MCF 10A (cell line): ENCODE measurements at regions of chr3 and their contacts with region 1.

Region 1: GRCh38 chr3:156674046-156674910 is at the start of gene TIPARP:
- DNase-seq: peak; percentile 97
- H3K4me3 Mint-ChIP-seq: peak within 1 kb of the TSS; percentile 79
- H3K27ac Mint-ChIP-seq: peak within 1 kb of the TSS; percentile 89
- H3K4me1 Mint-ChIP-seq: peaks cover 20% of the 10 kb centered on the region
- H3K27me3 Mint-ChIP-seq: no peaks in the 10 kb centered on the region
- CTCF ChIP-seq: peak; percentile 40
- total RNA-seq, gene TIPARP: 41.6 and 50.0 TPM in 2 replicates

Region 2: DNA sequence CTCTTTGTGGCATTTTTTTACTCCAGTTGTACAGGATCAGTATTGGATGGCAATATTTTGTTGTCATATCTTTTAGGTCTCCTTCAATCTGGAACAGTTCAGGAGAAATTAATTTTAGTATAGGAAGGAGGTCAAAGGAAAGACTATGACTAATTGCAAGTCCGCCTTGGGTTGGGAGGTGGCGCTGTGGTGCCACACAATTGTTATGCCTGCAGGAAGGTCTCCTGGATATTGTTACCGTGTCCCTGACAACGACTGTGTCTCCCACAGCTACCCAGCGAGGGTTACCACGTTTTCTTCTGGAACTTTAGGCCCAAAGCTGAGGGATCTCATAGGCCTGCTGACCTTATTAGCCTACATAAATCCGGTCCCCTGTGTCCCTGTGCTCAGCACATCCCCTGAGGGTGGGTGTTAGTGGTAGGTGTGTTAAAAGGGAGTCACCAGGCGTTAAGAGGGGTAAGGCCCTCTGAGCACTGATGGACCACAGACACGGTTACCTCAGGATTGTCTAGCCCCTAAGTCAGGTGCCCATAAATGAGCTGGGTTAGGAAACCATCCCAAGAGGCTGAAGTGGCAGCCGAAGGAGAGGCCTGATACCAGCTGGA is 522.4 kb before region 1 on chr3:
- CTCF ChIA-PET with region 1: interaction called, 13 read pairs
- POLR2A ChIA-PET with region 1: no interaction called
- intact Hi-C with region 1: loop called (anchors 2 kb)
- DNase-seq: peak; percentile 69
- H3K4me3 Mint-ChIP-seq: no peak overlapping the region
- H3K27ac Mint-ChIP-seq: no peak overlapping the region
- H3K4me1 Mint-ChIP-seq: no peaks in the 10 kb centered on the region
- H3K27me3 Mint-ChIP-seq: no peaks in the 10 kb centered on the region
- CTCF ChIP-seq: peak; percentile 74

Region 3: DNA sequence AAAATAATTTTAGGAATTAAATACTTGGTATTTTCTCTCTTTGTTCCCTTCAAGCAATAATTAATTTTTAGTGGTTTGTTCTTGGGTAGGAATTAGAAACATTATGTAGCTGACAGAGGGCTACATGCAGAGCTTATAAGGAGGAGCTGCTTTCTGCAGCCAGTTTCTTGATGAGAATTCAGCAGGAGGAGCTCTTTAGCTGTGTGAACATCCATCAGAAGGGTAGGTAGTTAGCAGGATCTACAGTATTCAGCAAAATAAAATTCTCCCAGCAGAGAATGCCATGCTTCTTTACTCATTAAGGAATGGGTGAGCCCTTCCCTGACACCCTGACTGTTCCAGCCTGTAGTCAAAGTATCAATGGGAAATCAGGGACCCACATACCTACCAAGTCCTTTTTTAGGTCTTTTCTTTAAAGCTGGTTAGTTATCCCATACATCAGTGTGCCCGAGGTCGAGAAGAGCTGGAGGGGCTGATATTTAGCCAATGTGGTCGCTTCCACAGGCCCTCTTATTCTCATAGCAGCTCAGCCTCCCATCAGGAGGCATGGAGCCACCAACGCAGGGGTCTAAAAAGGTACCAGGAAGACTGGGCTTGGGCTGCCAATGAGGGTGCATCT is 499.9 kb before region 1 on chr3:
- CTCF ChIA-PET with region 1: no interaction called
- POLR2A ChIA-PET with region 1: no interaction called
- intact Hi-C with region 1: no loop called
- DNase-seq: peak; percentile 51
- H3K4me3 Mint-ChIP-seq: no peak overlapping the region
- H3K27ac Mint-ChIP-seq: no peak overlapping the region
- H3K4me1 Mint-ChIP-seq: no peaks in the 10 kb centered on the region
- H3K27me3 Mint-ChIP-seq: no peaks in the 10 kb centered on the region
- CTCF ChIP-seq: peak; percentile 25

Region 4: GRCh38 chr3:156664011-156664830 is 10.1 kb before region 1 on chr3:
- CTCF ChIA-PET with region 1: interaction called, 11 read pairs
- POLR2A ChIA-PET with region 1: interaction called, 6 read pairs
- intact Hi-C with region 1: no loop called
- DNase-seq: no peak
- H3K4me3 Mint-ChIP-seq: no peak overlapping the region
- H3K27ac Mint-ChIP-seq: no peak overlapping the region
- H3K4me1 Mint-ChIP-seq: peaks cover 5% of the 10 kb centered on the region
- H3K27me3 Mint-ChIP-seq: no peaks in the 10 kb centered on the region
- CTCF ChIP-seq: no peak

Region 5: DNA sequence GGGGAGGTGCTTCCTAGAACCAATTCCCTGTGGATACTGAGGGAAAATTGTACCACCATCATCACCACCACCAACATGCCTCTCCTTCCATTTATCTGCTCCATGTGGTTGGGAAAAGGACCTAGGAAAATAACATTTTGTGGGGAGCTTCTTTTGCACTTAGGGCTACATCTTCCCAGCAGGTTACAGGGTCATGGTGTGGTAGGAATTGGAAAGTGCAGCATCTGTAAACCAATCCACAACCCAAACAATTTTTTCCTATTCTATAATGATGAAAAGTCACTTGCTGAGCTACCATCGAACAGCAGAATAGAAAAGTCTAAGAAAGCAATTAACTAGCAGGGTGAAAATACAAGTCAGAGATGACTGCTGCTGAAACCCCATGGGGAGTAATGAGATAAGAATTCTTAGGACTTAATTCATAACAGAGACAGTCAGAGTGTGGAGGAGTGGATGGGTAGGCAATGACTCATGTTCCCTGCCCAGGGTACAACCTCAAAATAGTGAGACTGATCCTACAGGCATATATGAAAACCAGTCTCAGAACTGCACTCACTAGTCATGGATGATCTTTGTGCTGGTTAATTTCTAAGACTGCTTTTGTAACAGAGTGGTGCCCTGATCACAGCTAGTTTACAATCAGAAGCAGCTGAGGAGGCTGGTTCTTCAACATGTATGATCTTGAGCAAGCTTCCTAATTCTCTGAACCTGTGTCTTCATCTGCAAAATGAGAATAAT is 113.8 kb after region 1 on chr3:
- CTCF ChIA-PET with region 1: interaction called, 3 read pairs
- POLR2A ChIA-PET with region 1: interaction called, 22 read pairs
- intact Hi-C with region 1: no loop called
- DNase-seq: peak; percentile 84
- H3K4me3 Mint-ChIP-seq: no peak overlapping the region
- H3K27ac Mint-ChIP-seq: peak overlapping the region; percentile 55
- H3K4me1 Mint-ChIP-seq: peaks cover 48% of the 10 kb centered on the region
- H3K27me3 Mint-ChIP-seq: no peaks in the 10 kb centered on the region
- CTCF ChIP-seq: no peak

Region 6: GRCh38 chr3:157081681-157082210 is 407.5 kb after region 1 on chr3:
- CTCF ChIA-PET with region 1: interaction called, 184 read pairs
- POLR2A ChIA-PET with region 1: interaction called, 134 read pairs
- intact Hi-C with region 1: loop called (anchors 1 kb)
- DNase-seq: peak; percentile 90
- H3K4me3 Mint-ChIP-seq: no peak overlapping the region
- H3K27ac Mint-ChIP-seq: peak overlapping the region; percentile 94
- H3K4me1 Mint-ChIP-seq: peaks cover 23% of the 10 kb centered on the region
- H3K27me3 Mint-ChIP-seq: no peaks in the 10 kb centered on the region
- CTCF ChIP-seq: peak; percentile 97

Region 7: GRCh38 chr3:157130467-157131251 is 456.4 kb after region 1 on chr3:
- CTCF ChIA-PET with region 1: interaction called, 56 read pairs
- POLR2A ChIA-PET with region 1: interaction called, 72 read pairs
- intact Hi-C with region 1: loop called (anchors 1 kb)
- DNase-seq: peak; percentile 80
- H3K4me3 Mint-ChIP-seq: peak overlapping the region; percentile 60
- H3K27ac Mint-ChIP-seq: peak overlapping the region; percentile 96
- H3K4me1 Mint-ChIP-seq: peaks cover 63% of the 10 kb centered on the region
- H3K27me3 Mint-ChIP-seq: no peaks in the 10 kb centered on the region
- CTCF ChIP-seq: peak; percentile 81